Thyroid gland (tissue), 4 donors: ENCODE measurements at regions of chr18 and their contacts with region 1.

Region 1: GRCh38 chr18:13566941-13567746 is 159.2 kb downstream of the FAM210A start:
- DNase-seq: no peak
- H3K4me3 ChIP-seq: no peak overlapping the region
- H3K27ac ChIP-seq: peak overlapping the region in 1 of 3 donors; percentile 31
- H3K4me1 ChIP-seq: peaks cover 33 to 39% of the 10 kb centered on the region in 2 donors
- H3K27me3 ChIP-seq: no peaks in the 10 kb centered on the region
- CTCF ChIP-seq: no peak
- POLR2A ChIP-seq: no peak

Region 2: DNA sequence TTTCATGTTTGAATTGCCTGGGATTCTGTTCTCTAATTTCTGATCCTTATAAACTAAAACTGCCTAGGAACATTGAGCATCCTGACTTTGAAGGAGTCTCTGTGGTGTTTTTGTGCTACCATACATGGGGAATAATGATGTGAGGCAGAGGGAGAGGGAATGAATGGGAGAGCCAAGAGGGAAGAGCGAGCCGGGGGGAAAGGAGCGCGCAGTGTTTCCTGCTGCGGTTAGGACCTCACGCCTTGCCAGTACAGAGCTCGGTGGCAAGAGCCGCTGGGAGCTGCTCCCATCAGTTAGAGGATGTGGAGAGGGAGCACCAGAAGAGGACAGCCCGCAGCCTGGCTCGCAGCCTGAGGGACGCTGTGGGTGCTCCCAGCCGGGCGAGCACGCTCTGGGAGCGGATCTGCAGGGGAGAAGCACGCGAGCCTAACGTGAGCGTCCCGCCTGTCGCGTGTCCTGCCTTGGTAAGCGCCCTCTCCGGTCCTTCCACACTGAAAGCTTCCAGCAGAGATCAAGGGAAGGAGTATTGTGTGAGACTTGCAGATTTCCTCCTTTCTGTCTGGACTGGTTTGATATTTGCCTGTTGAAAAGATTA is 44.6 kb after region 1 on chr18:
- intact Hi-C with region 1: loop called (anchors 10 kb)
- DNase-seq: peak in 1 of 2 donors; percentile 15
- H3K4me3 ChIP-seq: no peak overlapping the region
- H3K27ac ChIP-seq: peak overlapping the region in 1 of 3 donors; percentile 53
- H3K4me1 ChIP-seq: peaks cover 0 to 42% of the 10 kb centered on the region in 2 donors
- H3K27me3 ChIP-seq: no peaks in the 10 kb centered on the region
- CTCF ChIP-seq: no peak
- POLR2A ChIP-seq: no peak

Region 3: DNA sequence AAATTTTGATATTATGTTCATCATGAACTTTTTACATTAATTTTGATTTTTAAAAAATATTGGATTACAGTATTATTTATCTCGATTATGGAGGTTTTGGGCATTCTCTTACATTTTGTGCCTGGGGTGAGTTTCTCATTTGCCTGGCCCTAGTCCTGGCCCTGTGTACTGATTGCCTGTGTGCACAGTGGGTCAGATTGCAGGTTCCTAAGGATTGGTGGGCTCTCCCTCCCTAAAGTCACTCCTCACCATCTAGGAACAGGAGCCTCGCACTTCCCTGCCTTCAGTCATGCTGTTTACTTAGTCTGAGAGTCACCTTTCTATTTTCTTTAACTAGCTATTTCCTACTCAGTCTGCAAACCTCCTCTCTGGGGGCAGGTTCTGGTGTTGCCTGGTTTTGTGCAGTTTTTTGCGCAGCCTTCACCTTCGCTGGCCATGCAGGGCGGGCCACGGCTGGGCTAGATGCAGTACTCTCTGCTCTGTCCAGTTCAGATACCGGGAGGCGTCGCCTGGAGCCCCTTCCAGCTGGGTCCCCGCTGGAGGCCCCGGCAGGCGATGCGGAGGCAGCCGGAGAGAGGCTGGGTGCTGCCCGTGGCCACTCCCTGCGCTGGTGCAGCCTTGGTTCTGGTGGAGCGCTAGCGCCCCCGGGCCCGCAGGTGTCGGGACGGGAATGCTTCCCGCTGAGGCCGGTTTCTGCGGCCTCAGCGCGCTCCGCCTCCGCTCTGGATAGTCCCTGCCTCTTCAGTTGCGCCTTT is 233.5 kb after region 1 on chr18:
- intact Hi-C with region 1: loop called (anchors 10 kb)
- DNase-seq: peak; percentile 68 to 74
- H3K4me3 ChIP-seq: peak overlapping the region in 2 of 3 donors; percentile 4 to 9
- H3K27ac ChIP-seq: no peak overlapping the region
- H3K4me1 ChIP-seq: peaks cover 0 to 5% of the 10 kb centered on the region in 2 donors
- H3K27me3 ChIP-seq: no peaks in the 10 kb centered on the region
- CTCF ChIP-seq: peak in 5 of 6 experiments; percentile 14 to 58 (median 53)
- POLR2A ChIP-seq: no peak